ENCODE measurements at regions of chr17 and their contacts with region 1.

Region 1: GRCh38 chr17:77834170-77835115 is 124.1 kb upstream of the TNRC6C start:
- DNase-seq: peak; percentile 64 to 91
- H3K4me3 ChIP-seq: no peak overlapping the region
- H3K27ac ChIP-seq: peak overlapping the region; percentile 66 to 70
- H3K4me1 ChIP-seq: peaks cover 18 to 39% of the 10 kb centered on the region in 2 donors
- H3K27me3 ChIP-seq: no peaks in the 10 kb centered on the region
- CTCF ChIP-seq: no peak

Region 2: DNA sequence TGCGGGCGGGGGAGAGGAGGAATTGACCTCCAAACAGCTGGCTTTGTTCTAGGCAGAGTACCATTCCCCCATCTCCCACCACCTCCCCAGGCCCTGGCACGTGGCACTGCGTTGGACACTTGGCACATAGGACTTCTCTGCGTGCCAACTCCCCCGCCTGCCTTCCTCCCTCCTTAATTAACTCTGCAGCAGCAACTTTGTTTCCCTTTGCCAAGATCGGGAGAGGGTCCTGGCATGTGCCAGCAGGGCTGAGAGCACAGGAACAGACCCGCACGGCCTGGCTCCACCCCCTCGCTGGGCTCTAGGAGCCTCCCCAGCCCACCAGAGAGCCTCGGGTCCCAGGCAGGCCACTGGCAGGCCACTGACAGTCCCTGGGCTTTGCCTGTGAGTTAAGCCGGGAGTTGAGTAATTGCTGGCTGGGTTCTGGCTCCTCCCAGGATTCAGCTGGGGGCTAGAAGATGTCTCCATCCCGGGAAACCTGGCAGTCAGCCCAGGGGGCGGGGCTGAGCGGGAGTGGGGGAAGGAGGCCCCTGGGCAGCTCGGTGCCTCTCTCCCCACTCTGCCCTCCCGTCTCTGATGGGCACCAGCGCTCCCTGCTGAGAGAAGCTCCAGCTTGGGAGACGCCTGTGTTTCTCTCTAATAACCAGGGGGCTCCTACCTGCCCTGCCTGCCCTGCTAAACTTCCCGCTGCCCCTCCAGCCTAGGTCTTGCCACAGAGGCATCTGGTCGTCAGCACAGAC is 99.9 kb before region 1 on chr17:
- intact Hi-C with region 1: loop called (anchors 2 kb)
- DNase-seq: peak; percentile 45 to 94
- H3K4me3 ChIP-seq: peak overlapping the region in 1 of 2 donors; percentile 47
- H3K27ac ChIP-seq: peak overlapping the region; percentile 85 to 87
- H3K4me1 ChIP-seq: peaks cover 21 to 44% of the 10 kb centered on the region in 2 donors
- H3K27me3 ChIP-seq: no peaks in the 10 kb centered on the region
- CTCF ChIP-seq: peak in 1 of 3 experiments; percentile 29

Region 3: GRCh38 chr17:77796176-77796860 is 38.1 kb before region 1 on chr17:
- intact Hi-C with region 1: loop called (anchors 1 kb)
- DNase-seq: peak; percentile 42 to 92
- H3K4me3 ChIP-seq: no peak overlapping the region
- H3K27ac ChIP-seq: peak overlapping the region; percentile 81 to 88
- H3K4me1 ChIP-seq: peaks cover 6 to 15% of the 10 kb centered on the region in 2 donors
- H3K27me3 ChIP-seq: no peaks in the 10 kb centered on the region
- CTCF ChIP-seq: no peak

Region 4: DNA sequence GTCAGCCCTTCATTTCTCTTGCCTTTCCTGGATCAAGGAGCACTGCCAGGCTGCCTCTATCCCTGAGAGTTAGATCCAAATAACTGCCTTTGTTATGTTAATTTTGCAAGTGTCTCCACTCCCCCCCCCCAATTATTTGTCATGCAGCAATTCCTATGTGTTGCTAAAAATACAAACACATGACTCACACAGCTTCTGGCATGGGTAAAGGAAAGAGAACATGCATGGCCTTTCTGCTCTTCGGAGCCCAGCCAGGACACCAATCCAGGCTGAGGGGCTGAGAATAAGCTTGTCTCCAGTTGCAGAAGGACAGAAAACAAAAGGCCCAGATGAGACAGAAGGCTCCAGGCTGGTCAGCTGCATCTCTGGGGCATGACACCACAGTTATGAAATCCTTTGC is 23.9 kb before region 1 on chr17:
- intact Hi-C with region 1: loop called (anchors 2 kb)
- DNase-seq: peak in 1 of 2 donors; percentile 88
- H3K4me3 ChIP-seq: no peak overlapping the region
- H3K27ac ChIP-seq: peak overlapping the region; percentile 52 to 73
- H3K4me1 ChIP-seq: peaks cover 17 to 20% of the 10 kb centered on the region in 2 donors
- H3K27me3 ChIP-seq: no peaks in the 10 kb centered on the region
- CTCF ChIP-seq: no peak

Region 5: DNA sequence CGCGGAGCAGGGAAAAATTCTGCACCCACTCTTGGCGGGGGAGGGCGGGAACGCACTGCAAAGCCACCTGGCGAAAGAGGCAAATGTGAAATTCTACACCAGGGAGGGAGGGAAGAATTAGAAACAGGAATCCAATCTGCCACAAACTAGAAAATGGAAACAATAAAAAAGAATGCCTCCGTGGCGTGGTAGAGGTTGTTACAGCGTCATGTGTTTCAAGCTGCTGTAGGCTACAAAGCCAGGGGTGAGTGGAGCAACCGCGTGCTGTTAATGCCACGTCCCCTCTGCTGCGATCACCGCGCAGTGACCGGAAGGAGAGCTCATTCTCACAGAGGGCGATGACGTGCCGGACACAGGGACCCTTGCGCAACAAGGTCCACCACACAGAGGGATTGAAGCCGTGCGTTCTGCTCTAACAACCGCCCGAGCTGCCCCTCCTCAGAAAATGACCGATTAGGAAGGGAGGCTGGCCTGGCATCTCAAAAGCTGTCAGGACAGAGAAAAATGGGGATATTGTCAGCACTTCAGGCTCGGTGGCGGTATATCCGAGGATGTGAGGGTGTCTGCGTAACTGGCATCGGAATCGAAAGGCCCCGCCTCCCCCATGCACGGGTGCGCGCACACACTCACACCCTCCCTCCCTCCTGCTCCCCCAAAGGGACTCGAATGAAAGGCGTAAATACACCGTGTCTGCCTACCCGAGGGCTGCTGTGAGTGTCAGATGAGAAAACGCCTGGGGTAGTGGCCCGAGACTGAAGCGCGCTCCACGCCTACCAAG is 53.2 kb after region 1 on chr17:
- intact Hi-C with region 1: loop called (anchors 2 kb)
- DNase-seq: peak; percentile 80 to 97
- H3K4me3 ChIP-seq: peak overlapping the region; percentile 54 to 68
- H3K27ac ChIP-seq: peak overlapping the region; percentile 80 to 84
- H3K4me1 ChIP-seq: peaks cover 0 to 12% of the 10 kb centered on the region in 2 donors
- H3K27me3 ChIP-seq: no peaks in the 10 kb centered on the region
- CTCF ChIP-seq: no peak

Region 6: DNA sequence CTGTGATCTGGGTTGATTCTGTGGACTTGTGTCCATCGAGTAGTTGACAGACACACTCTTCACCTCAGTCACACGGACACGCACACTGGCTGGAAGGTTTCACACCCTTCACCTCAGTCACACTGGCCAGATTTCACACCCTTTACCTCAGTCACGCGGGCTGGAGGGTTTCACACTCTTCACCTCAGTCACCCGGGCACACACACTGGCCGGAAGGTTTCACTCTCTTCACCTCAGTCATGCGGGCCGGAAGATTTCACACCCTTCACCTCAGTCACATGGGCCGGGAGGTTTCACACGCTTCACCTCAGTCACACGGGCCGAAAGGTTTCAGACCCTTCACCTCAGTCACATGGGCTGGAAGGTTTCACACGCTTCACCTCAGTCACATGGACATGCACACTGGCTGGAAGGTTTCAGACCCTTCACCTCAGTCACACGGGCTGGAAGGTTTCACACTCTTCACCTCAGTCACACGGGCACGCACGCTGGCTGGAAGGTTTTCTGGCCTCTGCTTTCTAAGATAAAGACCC is 640.2 kb after region 1 on chr17:
- intact Hi-C with region 1: no loop called
- DNase-seq: no peak
- H3K4me3 ChIP-seq: no peak overlapping the region
- H3K27ac ChIP-seq: no peak overlapping the region
- H3K4me1 ChIP-seq: no peaks in the 10 kb centered on the region
- H3K27me3 ChIP-seq: no peaks in the 10 kb centered on the region
- CTCF ChIP-seq: no peak

Measured in ascending aorta (tissue), 2 donors.